Activated CD8-positive, alpha-beta T cell treated with anti-CD3 and anti-CD28 coated beads, Interleukin-2, amount 10 ng/mL, durations not matched to agents 7 days and 5 days (primary cell): ENCODE measurements at regions of chr3 and their contacts with region 1.

Region 1: DNA sequence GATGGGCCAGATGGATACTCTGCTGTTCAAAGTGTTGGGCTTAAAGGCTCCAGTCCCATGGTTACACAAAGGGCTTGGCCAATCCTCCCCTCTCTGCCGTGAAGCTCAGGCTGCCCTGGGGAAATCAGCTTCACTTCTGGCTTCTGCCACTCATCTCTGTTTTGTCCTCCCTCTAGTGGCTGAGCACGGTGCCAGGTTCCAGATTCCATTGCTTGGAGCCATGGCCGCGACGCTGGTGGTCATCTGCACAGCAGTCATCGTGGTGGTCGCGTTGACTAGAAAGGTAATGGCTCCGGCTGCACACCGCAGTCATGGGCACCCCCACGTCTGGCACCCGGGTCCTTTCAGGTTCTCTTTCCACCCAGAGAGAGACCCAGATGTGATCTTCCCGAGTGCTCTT is 5.6 kb downstream of the TIGIT start:
- DNase-seq: peak; percentile 43
- ATAC-seq: peak; percentile 63
- H3K4me3 Mint-ChIP-seq: peak overlapping the region; percentile 12
- H3K27ac Mint-ChIP-seq: no peak overlapping the region
- H3K4me1 Mint-ChIP-seq: peaks cover 17% of the 10 kb centered on the region
- H3K27me3 Mint-ChIP-seq: no peaks in the 10 kb centered on the region

Region 2: DNA sequence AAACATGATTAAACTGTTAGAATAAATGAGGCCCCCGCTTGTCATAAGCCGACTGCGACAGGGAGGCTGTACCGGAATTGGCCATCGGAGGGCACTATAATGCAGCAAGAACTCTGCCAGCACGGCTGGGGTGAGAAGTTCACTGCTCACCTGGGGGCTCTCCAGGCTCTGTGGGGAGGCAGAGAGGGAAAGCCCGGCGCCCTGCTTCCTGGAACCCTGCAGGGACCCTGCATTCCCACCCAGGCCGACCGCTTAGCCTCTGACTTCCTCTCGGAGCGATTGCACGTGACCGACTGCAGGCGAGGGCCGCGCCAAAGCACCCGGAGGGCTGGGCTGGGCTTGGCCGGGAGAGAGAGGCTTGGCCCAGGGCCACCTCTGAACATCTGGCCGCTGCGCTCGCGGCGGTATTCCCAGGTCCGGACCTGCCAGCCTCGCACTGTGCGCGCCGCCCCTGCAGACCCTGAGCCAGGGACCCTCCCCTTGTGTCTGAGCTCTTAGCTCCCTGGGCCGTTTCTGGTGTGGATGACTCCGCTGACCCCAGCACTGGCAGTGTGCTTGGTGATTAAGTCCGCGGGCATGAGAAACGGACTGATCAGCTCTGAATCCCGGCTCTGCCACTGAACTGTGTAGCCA is 146.8 kb before region 1 on chr3:
- CTCF ChIA-PET with region 1: interaction called, 14 read pairs
- POLR2A ChIA-PET with region 1: no interaction called
- DNase-seq: peak; percentile 85
- ATAC-seq: peak; percentile 89
- H3K4me3 Mint-ChIP-seq: no peak overlapping the region
- H3K27ac Mint-ChIP-seq: no peak overlapping the region
- H3K4me1 Mint-ChIP-seq: peaks cover 6% of the 10 kb centered on the region
- H3K27me3 Mint-ChIP-seq: no peaks in the 10 kb centered on the region